ENCODE measurements at regions of chr10 and their contacts with region 1.

Region 1: DNA sequence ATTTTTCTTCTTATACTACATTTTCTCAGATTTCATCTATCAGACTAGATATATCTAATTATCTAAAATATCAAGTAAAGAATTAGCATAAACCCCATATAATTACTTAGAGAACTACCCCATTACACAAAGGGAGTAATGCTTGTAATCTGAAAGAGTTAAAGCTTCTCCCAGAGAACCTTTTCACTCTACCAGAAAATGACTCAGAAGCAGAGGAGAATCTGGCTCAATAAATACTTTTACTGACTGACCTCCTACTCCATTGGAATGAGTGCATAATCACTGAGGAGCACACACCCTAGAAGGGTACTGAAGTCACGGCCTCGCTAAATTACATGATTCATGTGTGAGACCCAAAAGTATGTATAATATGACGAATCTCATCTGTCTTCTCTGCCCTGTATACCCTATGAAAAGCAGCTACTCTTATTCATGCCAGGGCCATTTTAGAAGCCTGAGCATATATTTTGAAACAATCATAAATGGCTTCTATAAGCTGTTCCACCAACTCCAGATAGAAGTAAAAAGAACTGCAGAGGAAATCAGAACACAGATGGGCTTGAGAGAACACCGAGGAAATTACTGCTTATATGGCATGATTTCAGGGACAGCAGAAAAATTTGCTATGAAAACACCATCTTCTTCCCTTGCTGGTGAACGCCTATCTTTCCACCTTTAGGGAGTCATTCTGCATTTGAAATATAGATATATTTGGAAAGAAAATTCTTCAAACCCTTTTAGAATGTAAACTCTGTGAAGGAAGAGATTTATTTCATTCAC is 32.7 kb downstream of the DNMBP start:
- DNase-seq: no peak
- ATAC-seq: no peak
- H3K4me3 ChIP-seq: no peak overlapping the region
- H3K4me3 Mint-ChIP-seq: no peak overlapping the region
- H3K27ac ChIP-seq: peak overlapping the region in 1 of 2 donors; percentile 26
- H3K27ac Mint-ChIP-seq: no peak overlapping the region
- H3K4me1 ChIP-seq: peaks cover 60 to 65% of the 10 kb centered on the region in 2 donors
- H3K4me1 Mint-ChIP-seq: peaks cover 66% of the 10 kb centered on the region
- H3K27me3 ChIP-seq: no peaks in the 10 kb centered on the region
- H3K27me3 Mint-ChIP-seq: no peaks in the 10 kb centered on the region
- CTCF ChIP-seq: no peak

Region 2: GRCh38 chr10:99993701-99994689 is 16.9 kb after region 1 on chr10:
- CTCF ChIA-PET with region 1: interaction called, 4 read pairs
- POLR2A ChIA-PET with region 1: no interaction called
- intact Hi-C with region 1: loop called (anchors 2 kb)
- DNase-seq: peak; percentile 91
- ATAC-seq: peak; percentile 94
- H3K4me3 ChIP-seq: peak overlapping the region in 3 of 5 experiments; percentile 12 to 38 (median 15)
- H3K4me3 Mint-ChIP-seq: peak overlapping the region; percentile 84
- H3K27ac ChIP-seq: peak overlapping the region; percentile 77 to 91
- H3K27ac Mint-ChIP-seq: peak overlapping the region; percentile 93
- H3K4me1 ChIP-seq: peaks cover 26 to 29% of the 10 kb centered on the region in 2 donors
- H3K4me1 Mint-ChIP-seq: peaks cover 44% of the 10 kb centered on the region
- H3K27me3 ChIP-seq: no peaks in the 10 kb centered on the region
- H3K27me3 Mint-ChIP-seq: no peaks in the 10 kb centered on the region
- CTCF ChIP-seq: no peak

Region 3: GRCh38 chr10:100254191-100254590 is 277.1 kb after region 1 on chr10:
- CTCF ChIA-PET with region 1: no interaction called
- POLR2A ChIA-PET with region 1: no interaction called
- intact Hi-C with region 1: no loop called
- DNase-seq: no peak
- ATAC-seq: no peak
- H3K4me3 ChIP-seq: no peak overlapping the region
- H3K4me3 Mint-ChIP-seq: no peak overlapping the region
- H3K27ac ChIP-seq: no peak overlapping the region
- H3K27ac Mint-ChIP-seq: no peak overlapping the region
- H3K4me1 ChIP-seq: no peaks in the 10 kb centered on the region
- H3K4me1 Mint-ChIP-seq: no peaks in the 10 kb centered on the region
- H3K27me3 ChIP-seq: no peaks in the 10 kb centered on the region
- H3K27me3 Mint-ChIP-seq: no peaks in the 10 kb centered on the region
- CTCF ChIP-seq: no peak